Prostate gland (tissue), 2 donors: ENCODE measurements at regions of chr4 and their contacts with region 1.

Region 1: DNA sequence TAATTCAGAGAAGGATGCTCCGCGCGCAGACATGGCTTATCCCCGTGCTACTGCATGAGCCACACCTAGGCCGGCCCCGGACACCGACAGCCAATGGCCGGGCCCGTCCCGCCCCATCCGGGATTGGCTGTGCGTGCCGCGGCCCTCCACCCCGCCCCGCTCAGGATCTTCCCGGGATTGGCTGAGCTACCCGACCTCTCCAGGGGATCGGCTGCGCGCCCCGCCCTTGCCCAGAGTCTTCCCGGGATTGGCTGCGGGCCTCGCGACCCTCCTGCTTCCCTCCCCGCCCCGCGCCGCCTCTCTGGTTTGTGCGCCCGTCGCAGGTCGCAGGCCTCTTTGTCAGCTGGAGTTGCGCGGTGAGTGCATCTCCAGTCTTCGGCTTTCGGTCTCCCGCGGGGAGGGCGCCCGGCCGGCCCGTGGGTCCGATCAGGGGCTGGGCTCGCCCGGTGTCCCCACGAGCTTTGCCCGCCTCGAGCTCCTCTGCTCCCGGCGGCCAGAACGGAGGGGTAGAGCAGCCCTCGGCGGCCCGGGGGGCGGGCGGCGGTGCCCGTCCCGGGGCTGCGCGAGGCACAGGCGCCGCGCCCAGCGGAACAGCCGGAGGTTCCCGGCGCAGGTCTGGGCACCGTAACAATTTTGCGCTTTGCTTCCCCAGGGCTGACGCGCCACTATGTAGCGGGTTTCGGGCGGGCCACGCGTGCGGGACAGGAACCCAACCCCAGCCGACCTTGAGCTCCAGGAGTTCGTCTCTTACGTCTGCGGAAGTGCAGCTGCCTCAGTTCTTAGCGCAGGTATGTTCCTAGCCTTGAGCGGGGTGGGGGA is 38.8 kb downstream of the ERVMER34-1 start:
- DNase-seq: peak; percentile 98
- H3K4me3 ChIP-seq: peak overlapping the region; percentile 88 to 96
- H3K27ac ChIP-seq: peak overlapping the region; percentile 90 to 91
- H3K4me1 ChIP-seq: peaks cover 2% of the 10 kb centered on the region
- H3K27me3 ChIP-seq: no peaks in the 10 kb centered on the region
- CTCF ChIP-seq: peak in 1 of 4 experiments; percentile 12
- POLR2A ChIP-seq: peak; percentile 89

Region 2: GRCh38 chr4:52659001-52659721 is 53.2 kb before region 1 on chr4 and contains the start of gene USP46:
- intact Hi-C with region 1: loop called (anchors 5 kb)
- DNase-seq: peak; percentile 67
- H3K4me3 ChIP-seq: peak within 1 kb of the TSS; percentile 86 to 91
- H3K27ac ChIP-seq: peak within 1 kb of the TSS; percentile 87 to 90
- H3K4me1 ChIP-seq: peaks cover 3% of the 10 kb centered on the region
- H3K27me3 ChIP-seq: no peaks in the 10 kb centered on the region
- CTCF ChIP-seq: no peak
- POLR2A ChIP-seq: peak; percentile 29
- total RNA-seq, gene USP46: 9.2 to 26.3 TPM

Region 3: GRCh38 chr4:52957220-52957686 is 244.9 kb after region 1 on chr4:
- intact Hi-C with region 1: no loop called
- DNase-seq: no peak
- H3K4me3 ChIP-seq: no peak overlapping the region
- H3K27ac ChIP-seq: no peak overlapping the region
- H3K4me1 ChIP-seq: no peaks in the 10 kb centered on the region
- H3K27me3 ChIP-seq: no peaks in the 10 kb centered on the region
- CTCF ChIP-seq: no peak
- POLR2A ChIP-seq: no peak